ENCODE measurements at regions of chr11 and their contacts with region 1.

Region 1: DNA sequence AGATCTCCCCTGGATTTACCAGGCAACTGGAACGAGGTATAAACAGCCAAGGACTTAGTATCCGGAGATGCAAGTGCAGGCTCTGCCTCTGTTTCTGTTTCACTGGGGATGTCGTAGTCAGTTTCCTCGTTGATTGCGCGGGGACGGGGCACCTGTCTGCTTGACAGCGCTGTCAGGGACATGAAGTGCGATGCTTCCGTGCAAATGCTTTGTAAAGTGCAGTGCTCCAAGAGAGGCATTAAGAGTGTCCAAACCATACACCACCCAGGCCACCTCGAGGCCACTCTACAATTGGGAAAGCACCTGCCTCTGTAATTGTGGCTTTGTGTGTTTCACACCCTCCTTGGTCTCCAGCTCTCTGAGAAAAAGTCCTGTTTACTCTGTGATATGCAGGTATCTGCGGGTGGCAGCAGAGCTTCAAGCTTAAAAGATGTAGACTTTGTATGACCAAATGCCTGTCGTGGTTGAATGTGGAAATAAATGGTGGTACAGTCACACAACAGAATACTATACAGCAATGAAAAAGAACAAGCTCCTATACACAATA is 18.6 kb upstream of the CD5 start:
- DNase-seq: peak in 6 of 10 donors; percentile 50 to 82 (median 66)
- ATAC-seq: peak; percentile 53 to 69
- H3K4me3 Mint-ChIP-seq: peak overlapping the region; percentile 70 to 91 (median 80)
- H3K27ac Mint-ChIP-seq: peak overlapping the region; percentile 90 to 99 (median 96)
- H3K4me1 Mint-ChIP-seq: peaks cover 34 to 53% (median 51%) of the 10 kb centered on the region in 4 donors
- H3K27me3 Mint-ChIP-seq: no peaks in the 10 kb centered on the region

Region 2: DNA sequence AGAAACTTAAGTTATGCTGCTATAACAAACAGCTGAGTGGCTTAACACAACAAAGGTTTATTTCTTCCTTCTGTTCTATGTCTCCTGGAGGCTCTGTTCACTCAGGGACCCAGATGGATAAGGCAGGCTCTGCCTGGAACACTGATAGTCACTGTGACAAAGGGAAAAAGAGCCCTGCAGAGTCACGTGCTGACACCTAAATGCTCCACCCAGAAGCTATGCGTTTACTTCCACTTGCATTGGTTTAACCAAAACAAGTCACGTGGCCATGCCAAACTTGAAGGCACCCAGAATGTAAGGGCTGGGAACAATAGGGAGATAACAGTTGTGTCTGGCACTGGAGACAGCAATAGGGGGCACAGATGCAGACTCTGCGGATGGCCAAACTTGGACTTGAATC is 330.4 kb before region 1 on chr11:
- POLR2A ChIA-PET with region 1: no interaction called
- DNase-seq: no peak
- ATAC-seq: no peak
- H3K4me3 Mint-ChIP-seq: no peak overlapping the region
- H3K27ac Mint-ChIP-seq: peak overlapping the region in 1 of 10 donors; percentile 7
- H3K4me1 Mint-ChIP-seq: no peaks in the 10 kb centered on the region
- H3K27me3 Mint-ChIP-seq: peaks cover 17 to 40% (median 20%) of the 10 kb centered on the region in 5 donors

Region 3: DNA sequence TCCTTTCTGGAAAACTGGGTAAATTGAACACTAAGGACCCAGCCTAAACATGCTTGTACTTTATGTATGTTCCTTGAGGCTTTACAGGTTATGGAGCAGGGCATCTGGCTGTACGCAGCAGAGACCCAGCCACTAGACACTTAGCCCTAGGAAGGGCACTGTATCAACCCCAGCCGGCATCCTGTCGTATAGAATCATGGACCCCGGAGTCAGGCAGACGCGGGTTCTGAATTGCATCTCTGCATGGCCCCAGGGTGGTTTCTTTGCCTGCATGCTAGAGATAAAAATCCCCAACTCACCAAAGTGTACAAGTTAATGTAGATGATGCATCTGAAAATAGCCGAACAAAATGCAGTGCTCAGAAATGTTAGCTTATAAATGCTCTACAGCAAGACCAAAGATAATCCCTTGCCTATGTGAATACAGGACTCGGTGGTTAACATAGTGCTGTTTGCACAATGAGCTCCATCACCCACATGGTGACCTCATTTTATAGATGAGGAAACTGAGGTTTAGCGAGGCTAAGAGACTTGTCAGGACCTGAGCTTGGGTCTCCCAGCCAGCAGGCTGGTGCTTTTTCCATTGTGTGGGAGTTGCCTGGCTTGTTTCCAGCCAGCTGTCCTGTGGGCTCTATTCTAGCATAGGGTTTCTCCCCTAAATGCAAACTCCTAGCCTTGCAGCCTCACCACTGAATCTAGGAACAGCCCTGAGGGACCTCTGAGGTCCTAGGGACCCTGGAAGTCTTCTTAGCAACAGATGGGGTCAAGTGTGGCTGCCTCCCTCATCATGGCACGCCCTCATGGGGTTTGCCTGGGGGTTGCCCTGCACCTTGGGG is 104.9 kb before region 1 on chr11:
- POLR2A ChIA-PET with region 1: interaction called, 15 read pairs
- DNase-seq: peak in 1 of 10 donors; percentile 40
- ATAC-seq: peak; percentile 39 to 45
- H3K4me3 Mint-ChIP-seq: peak overlapping the region; percentile 57 to 95 (median 81)
- H3K27ac Mint-ChIP-seq: peak overlapping the region; percentile 81 to 99 (median 94)
- H3K4me1 Mint-ChIP-seq: peaks cover 36 to 93% (median 89%) of the 10 kb centered on the region in 4 donors
- H3K27me3 Mint-ChIP-seq: no peaks in the 10 kb centered on the region

Region 4: GRCh38 chr11:61021661-61022212 is 61.9 kb before region 1 on chr11:
- POLR2A ChIA-PET with region 1: interaction called, 61 read pairs
- DNase-seq: peak; percentile 72 to 97 (median 93)
- ATAC-seq: peak; percentile 60 to 81
- H3K4me3 Mint-ChIP-seq: peak overlapping the region; percentile 68 to 86 (median 76)
- H3K27ac Mint-ChIP-seq: peak overlapping the region; percentile 89 to 100 (median 98)
- H3K4me1 Mint-ChIP-seq: peaks cover 44 to 85% (median 72%) of the 10 kb centered on the region in 4 donors
- H3K27me3 Mint-ChIP-seq: no peaks in the 10 kb centered on the region

Region 5: GRCh38 chr11:61061081-61061826 is 22.4 kb before region 1 on chr11:
- POLR2A ChIA-PET with region 1: interaction called, 18 read pairs
- DNase-seq: peak in 9 of 10 donors; percentile 32 to 74 (median 47)
- ATAC-seq: peak; percentile 81 to 86
- H3K4me3 Mint-ChIP-seq: peak overlapping the region; percentile 63 to 90 (median 84)
- H3K27ac Mint-ChIP-seq: peak overlapping the region; percentile 83 to 98 (median 92)
- H3K4me1 Mint-ChIP-seq: peaks cover 26 to 72% (median 59%) of the 10 kb centered on the region in 4 donors
- H3K27me3 Mint-ChIP-seq: no peaks in the 10 kb centered on the region

Region 6: GRCh38 chr11:61102667-61103571 is 19.2 kb after region 1 on chr11:
- POLR2A ChIA-PET with region 1: interaction called, 31 read pairs
- DNase-seq: peak in 2 of 10 donors; percentile 42 to 53
- ATAC-seq: peak; percentile 35 to 45
- H3K4me3 Mint-ChIP-seq: no peak overlapping the region
- H3K27ac Mint-ChIP-seq: peak overlapping the region in 1 of 10 donors; percentile 100
- H3K4me1 Mint-ChIP-seq: peaks cover 24 to 46% (median 42%) of the 10 kb centered on the region in 4 donors
- H3K27me3 Mint-ChIP-seq: no peaks in the 10 kb centered on the region

Region 7: DNA sequence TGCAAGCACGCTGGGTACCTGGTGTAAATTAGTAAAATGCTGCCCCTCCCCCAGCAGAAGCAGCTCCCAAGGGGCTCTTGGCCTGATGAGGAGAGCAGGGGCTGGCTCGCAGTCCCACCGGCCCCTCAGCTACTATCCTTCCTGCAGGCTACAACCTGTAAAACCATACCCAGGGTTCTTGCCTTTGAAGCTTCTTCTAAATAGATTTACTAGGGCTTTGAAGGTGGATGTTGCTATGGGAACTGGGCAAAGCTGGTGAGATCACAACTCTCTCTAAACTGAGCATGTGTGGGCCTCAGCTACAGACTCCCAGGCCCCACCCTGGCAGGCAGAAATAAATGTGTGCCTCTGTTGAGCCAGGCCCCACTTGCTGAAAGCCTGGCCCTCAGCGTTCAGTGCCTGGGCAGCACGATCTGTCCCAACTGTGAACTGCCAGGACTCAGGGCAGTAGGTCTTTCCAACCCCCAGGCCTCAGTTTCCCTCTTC is 37.1 kb after region 1 on chr11:
- POLR2A ChIA-PET with region 1: interaction called, 54 read pairs
- DNase-seq: peak; percentile 39 to 93 (median 80)
- ATAC-seq: peak; percentile 89 to 94
- H3K4me3 Mint-ChIP-seq: peak overlapping the region; percentile 71 to 90 (median 84)
- H3K27ac Mint-ChIP-seq: peak overlapping the region; percentile 95 to 100 (median 100)
- H3K4me1 Mint-ChIP-seq: peaks cover 49 to 76% (median 63%) of the 10 kb centered on the region in 4 donors
- H3K27me3 Mint-ChIP-seq: no peaks in the 10 kb centered on the region

Region 8: GRCh38 chr11:61418136-61418535 is 334.5 kb after region 1 on chr11:
- POLR2A ChIA-PET with region 1: no interaction called
- DNase-seq: no peak
- ATAC-seq: no peak
- H3K4me3 Mint-ChIP-seq: no peak overlapping the region
- H3K27ac Mint-ChIP-seq: peak overlapping the region in 5 of 10 donors; percentile 3 to 71 (median 5)
- H3K4me1 Mint-ChIP-seq: peaks cover 16 to 58% (median 47%) of the 10 kb centered on the region in 4 donors
- H3K27me3 Mint-ChIP-seq: no peaks in the 10 kb centered on the region